ENCODE measurements at regions of chr1 and their contacts with region 1.

Region 1: GRCh38 chr1:167059045-167059808 is 30.9 kb downstream of the GPA33 start:
- H3K4me3 Mint-ChIP-seq: no peak overlapping the region
- H3K27ac Mint-ChIP-seq: no peak overlapping the region
- H3K4me1 Mint-ChIP-seq: peaks cover 6% of the 10 kb centered on the region
- H3K27me3 Mint-ChIP-seq: peaks cover 2% of the 10 kb centered on the region

Region 2: DNA sequence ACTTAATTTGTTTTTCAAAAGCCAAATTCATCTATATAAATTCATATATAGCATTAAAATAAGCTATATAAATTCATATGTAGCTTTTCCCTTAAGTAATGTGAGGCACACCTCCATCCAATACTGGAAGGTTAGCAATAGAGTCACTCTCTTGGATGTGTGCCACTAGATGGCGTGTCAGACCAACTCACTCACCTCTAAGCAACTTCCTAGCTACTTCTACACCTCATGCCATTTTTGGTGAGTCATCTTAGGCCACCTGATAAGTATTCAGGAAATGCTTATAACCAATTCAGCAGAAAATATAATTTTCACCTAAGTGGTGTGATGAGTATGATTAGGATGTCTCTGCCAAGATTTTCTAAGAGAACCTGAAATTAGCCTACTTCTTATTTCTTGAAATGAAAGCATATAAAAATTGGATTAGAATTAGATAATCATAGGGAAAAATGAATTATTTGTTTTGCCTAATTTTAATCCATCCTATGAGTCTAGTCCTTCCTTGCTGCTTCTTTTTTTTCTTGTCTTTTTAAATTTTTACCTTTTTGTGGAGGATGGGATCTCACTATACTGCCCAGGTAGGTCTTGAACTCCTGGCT is 148.7 kb before region 1 on chr1:
- intact Hi-C with region 1: loop called (anchors 1 kb)
- H3K4me3 Mint-ChIP-seq: no peak overlapping the region
- H3K27ac Mint-ChIP-seq: no peak overlapping the region
- H3K4me1 Mint-ChIP-seq: peaks cover 11% of the 10 kb centered on the region
- H3K27me3 Mint-ChIP-seq: no peaks in the 10 kb centered on the region